T-cell (primary cell): ENCODE measurements at regions of chr14 and their contacts with region 1.

Region 1: DNA sequence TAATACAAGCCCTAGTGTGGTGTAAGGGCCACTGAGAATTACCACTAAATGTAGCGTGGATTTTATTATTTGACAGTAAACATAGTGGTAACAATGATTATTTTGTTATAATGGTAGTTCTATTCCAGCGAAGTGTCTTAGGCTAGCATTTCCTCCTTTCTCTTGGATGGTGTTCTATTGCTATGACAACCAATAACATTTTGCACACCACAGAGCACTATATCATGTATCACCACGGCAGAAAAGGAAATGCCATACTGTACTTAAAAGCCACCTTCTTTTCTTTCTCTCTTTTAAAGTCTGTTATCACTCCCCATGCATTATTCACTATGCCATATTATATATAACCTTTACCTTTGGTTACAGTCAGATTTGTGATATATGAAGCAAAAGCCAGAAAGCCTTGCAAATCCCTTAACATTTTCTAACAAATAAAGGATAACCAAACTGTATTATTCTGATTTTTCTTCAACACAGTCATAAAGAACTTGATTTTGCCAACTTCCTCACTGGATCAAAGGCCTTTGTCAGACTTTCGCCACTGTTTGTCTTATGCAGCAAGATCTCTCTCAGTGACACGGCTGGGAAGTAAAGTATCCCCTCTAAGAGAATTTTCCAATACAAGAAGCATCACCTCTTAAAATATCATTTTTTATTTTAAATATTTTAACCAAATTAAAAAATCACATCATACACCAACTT is 195.8 kb downstream of the FOXN3 start:
- DNase-seq: peak in 2 of 35 experiments; percentile 8 to 57
- ATAC-seq: peak; percentile 70 to 99 (median 82)
- H3K4me3 ChIP-seq: no peak overlapping the region
- H3K4me3 Mint-ChIP-seq: peak overlapping the region in 1 of 3 donors; percentile 19
- H3K27ac ChIP-seq: peak overlapping the region; percentile 28
- H3K27ac Mint-ChIP-seq: peak overlapping the region in 1 of 2 donors; percentile 77
- H3K4me1 ChIP-seq: peaks cover 19 to 20% of the 10 kb centered on the region in 2 experiments
- H3K4me1 Mint-ChIP-seq: peaks cover 49 to 67% (median 54%) of the 10 kb centered on the region in 3 donors
- H3K27me3 ChIP-seq: no peaks in the 10 kb centered on the region
- H3K27me3 Mint-ChIP-seq: no peaks in the 10 kb centered on the region

Region 2: DNA sequence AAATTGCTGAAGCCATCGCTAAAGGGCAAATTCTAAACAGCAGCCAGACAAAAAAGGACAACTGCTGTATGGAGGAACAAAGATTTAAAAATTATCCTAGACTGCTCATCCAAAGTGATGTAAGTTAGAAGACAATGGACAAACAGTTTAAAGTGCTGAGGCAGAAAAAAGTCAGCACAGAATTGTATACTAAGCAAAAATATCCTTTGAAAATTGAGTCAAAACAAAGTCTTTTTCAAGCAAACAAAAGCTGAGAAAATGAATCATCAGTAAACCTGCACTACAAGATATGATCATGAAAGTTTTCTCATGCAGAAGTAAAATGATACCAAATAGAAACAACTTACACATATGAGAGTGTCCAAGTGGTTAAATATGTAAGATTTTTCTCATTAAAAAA is 472.1 kb before region 1 on chr14:
- CTCF ChIA-PET with region 1: no interaction called
- POLR2A ChIA-PET with region 1: interaction called in 1 of 2 experiments, 11 read pairs
- DNase-seq: no peak
- ATAC-seq: no peak
- H3K4me3 ChIP-seq: no peak overlapping the region
- H3K4me3 Mint-ChIP-seq: no peak overlapping the region
- H3K27ac ChIP-seq: no peak overlapping the region
- H3K27ac Mint-ChIP-seq: no peak overlapping the region
- H3K4me1 ChIP-seq: no peaks in the 10 kb centered on the region
- H3K4me1 Mint-ChIP-seq: no peaks in the 10 kb centered on the region
- H3K27me3 ChIP-seq: no peaks in the 10 kb centered on the region
- H3K27me3 Mint-ChIP-seq: no peaks in the 10 kb centered on the region

Region 3: GRCh38 chr14:89249065-89249695 is 27.9 kb after region 1 on chr14:
- CTCF ChIA-PET with region 1: interaction called in 1 of 2 experiments, 3 read pairs
- POLR2A ChIA-PET with region 1: interaction called in 1 of 2 experiments, 17 read pairs
- DNase-seq: no peak
- ATAC-seq: no peak
- H3K4me3 ChIP-seq: no peak overlapping the region
- H3K4me3 Mint-ChIP-seq: no peak overlapping the region
- H3K27ac ChIP-seq: no peak overlapping the region
- H3K27ac Mint-ChIP-seq: no peak overlapping the region
- H3K4me1 ChIP-seq: peaks cover 0 to 8% of the 10 kb centered on the region in 2 experiments
- H3K4me1 Mint-ChIP-seq: peaks cover 65 to 80% (median 70%) of the 10 kb centered on the region in 3 donors
- H3K27me3 ChIP-seq: no peaks in the 10 kb centered on the region
- H3K27me3 Mint-ChIP-seq: no peaks in the 10 kb centered on the region